A673 (cell line): ENCODE measurements at regions of chr2 and their contacts with region 1.

Region 1: DNA sequence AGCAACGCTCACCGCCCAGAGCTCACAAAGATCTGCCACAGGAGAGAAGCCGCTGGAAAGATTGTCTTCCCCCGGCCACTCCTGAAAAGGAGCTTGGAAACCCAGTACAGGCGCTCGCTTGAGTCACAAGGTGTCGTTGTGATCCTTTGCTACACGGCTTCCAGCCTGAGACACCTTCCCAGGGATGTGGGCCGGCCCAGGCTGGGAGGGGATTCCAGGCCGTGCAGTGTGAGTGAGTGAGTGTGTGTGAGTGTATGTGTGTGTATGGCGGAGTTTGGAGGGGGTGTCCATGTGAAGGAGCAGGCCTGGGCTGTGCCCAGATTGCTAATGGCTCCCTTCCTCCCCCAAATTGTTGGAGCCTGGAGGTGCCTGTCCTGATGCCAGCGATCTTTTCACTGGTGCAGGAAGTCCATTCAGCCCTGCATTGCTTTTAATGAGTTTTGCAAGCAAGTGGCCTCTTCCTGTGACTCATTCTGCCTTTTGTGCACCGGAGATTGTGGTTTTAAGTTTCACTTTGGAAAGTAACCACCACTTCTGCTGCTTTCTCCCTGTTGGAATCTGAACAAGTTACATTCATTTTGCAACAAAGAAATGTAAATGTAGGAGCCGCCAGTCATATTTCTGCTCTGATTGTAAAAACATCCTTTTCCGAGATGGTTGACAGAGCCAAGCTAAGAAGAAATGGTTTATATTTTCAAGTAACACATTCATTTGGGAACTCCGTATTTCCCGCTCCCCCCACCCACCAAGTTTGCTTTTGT is 83.7 kb downstream of the LPIN1 start:
- DNase-seq: peak; percentile 99
- H3K4me3 ChIP-seq: peak overlapping the region; percentile 37
- H3K27ac ChIP-seq: peak overlapping the region; percentile 99
- H3K4me1 ChIP-seq: peaks cover 42% of the 10 kb centered on the region
- H3K27me3 ChIP-seq: no peaks in the 10 kb centered on the region
- CTCF ChIP-seq: peak; percentile 67

Region 2: DNA sequence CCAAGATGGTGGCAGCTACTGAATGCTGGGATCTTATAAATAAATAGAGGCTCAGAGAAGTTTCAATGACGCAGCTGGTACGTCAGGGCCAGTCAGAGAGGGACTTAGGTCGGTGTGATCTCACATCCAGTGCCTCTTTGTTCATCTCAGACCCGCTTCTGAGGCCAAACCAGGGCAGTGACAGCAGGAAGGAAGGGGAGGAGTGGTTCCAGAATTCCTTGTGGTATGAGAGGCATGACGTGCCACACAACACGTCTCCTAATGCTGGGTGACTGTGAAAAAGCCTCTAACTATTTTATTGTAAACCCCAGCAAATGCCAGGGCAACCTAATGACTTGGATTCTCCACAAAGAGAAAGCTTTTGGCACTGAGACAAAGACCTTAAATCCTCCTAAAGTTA is 339.6 kb after region 1 on chr2:
- CTCF ChIA-PET with region 1: no interaction called
- POLR2A ChIA-PET with region 1: no interaction called
- intact Hi-C with region 1: loop called (anchors 5 kb)
- DNase-seq: peak; percentile 78
- H3K4me3 ChIP-seq: no peak overlapping the region
- H3K27ac ChIP-seq: peak overlapping the region; percentile 88
- H3K4me1 ChIP-seq: peaks cover 21% of the 10 kb centered on the region
- H3K27me3 ChIP-seq: no peaks in the 10 kb centered on the region
- CTCF ChIP-seq: no peak

Region 3: GRCh38 chr2:12465631-12466135 is 635.6 kb after region 1 on chr2:
- CTCF ChIA-PET with region 1: interaction called, 3 read pairs
- POLR2A ChIA-PET with region 1: no interaction called
- intact Hi-C with region 1: loop called (anchors 5 kb)
- DNase-seq: peak; percentile 15
- H3K4me3 ChIP-seq: no peak overlapping the region
- H3K27ac ChIP-seq: peak overlapping the region; percentile 53
- H3K4me1 ChIP-seq: peaks cover 14% of the 10 kb centered on the region
- H3K27me3 ChIP-seq: no peaks in the 10 kb centered on the region
- CTCF ChIP-seq: no peak

Region 4: DNA sequence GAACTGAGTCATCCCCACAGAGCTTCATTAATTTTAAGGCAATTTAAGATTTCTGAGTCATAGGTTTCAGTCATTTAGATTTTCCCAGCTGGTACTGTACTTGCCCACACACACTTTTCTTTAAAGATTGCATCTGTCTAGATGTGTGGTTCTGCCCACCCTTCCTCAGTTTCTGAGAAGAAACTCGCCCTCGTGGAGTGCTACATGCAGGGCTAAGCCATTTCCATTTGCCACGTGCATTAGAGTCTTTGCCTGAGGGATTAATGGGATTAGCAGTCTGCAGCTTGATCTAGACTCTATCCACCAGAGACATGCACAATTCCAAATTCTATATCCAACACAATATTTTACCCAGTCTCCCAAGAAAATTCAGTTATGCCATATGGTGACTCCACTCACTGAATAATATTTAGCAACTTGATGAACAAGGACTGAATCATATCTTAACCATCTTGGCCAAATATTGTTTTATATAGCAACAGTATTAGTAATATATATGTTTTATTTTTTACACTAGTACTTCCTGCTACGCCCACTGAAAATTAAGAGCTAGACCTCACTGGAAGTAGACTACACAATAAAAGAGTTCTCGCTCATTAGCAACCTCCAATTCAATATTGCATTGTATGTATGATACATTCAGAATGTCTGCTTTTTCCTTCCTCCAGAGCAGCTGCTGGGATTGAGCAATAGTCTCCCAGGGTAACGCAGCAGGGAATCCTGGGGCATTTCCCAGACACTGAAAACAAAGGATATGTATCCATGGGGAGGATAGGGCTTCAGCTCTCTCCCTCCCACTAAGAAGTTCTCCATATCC is 872.4 kb after region 1 on chr2:
- CTCF ChIA-PET with region 1: no interaction called
- POLR2A ChIA-PET with region 1: no interaction called
- intact Hi-C with region 1: loop called (anchors 1 kb)
- DNase-seq: peak; percentile 95
- H3K4me3 ChIP-seq: no peak overlapping the region
- H3K27ac ChIP-seq: peak overlapping the region; percentile 67
- H3K4me1 ChIP-seq: peaks cover 40% of the 10 kb centered on the region
- H3K27me3 ChIP-seq: no peaks in the 10 kb centered on the region
- CTCF ChIP-seq: no peak